ENCODE measurements at regions of chr19 and their contacts with region 1.

Region 1: DNA sequence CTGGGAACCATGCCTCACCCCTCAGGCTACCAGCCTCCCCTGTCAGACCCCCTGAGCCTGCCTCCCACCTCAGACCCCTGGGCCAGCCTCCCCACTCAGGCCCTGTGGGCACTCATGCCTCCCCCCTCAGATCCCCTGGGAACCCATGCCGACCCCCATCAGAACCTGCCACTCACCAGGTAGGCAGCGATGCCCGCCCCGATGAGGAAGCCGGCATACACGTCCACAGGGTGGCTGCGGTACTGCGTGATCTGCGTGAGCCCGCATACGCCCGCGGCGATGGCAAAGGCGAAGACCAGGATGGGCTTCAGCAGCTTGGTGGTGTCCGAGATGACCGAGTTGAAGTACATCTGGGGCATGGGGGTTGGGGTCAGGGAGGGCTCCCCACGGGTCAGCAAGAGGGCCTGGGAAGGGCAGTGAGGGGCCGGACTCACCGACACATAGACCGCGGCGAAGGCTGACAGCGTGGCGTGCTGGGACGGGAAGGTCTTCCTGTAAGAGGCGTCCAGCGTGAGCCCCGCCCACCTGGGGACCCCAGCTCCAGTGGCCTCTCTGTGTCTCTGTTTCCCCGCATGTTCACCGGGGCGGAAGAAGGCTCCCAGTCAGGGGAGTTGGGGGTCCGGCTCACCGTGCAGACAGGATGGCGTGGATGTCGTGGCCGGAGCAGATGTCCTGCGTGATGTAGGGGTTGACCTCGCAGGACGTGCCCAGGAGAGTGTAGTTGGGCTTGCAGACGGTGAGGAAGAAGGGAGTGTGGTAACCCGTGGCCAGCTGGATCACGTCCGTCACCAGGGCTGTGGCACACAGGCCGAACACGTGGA is 7.3 kb downstream of the PLPPR3 start:
- DNase-seq: peak; percentile 27
- ATAC-seq: peak; percentile 17
- H3K4me3 Mint-ChIP-seq: no peak overlapping the region
- H3K27ac Mint-ChIP-seq: no peak overlapping the region
- H3K4me1 Mint-ChIP-seq: no peaks in the 10 kb centered on the region
- H3K27me3 Mint-ChIP-seq: no peaks in the 10 kb centered on the region
- CTCF ChIP-seq: no peak

Region 2: DNA sequence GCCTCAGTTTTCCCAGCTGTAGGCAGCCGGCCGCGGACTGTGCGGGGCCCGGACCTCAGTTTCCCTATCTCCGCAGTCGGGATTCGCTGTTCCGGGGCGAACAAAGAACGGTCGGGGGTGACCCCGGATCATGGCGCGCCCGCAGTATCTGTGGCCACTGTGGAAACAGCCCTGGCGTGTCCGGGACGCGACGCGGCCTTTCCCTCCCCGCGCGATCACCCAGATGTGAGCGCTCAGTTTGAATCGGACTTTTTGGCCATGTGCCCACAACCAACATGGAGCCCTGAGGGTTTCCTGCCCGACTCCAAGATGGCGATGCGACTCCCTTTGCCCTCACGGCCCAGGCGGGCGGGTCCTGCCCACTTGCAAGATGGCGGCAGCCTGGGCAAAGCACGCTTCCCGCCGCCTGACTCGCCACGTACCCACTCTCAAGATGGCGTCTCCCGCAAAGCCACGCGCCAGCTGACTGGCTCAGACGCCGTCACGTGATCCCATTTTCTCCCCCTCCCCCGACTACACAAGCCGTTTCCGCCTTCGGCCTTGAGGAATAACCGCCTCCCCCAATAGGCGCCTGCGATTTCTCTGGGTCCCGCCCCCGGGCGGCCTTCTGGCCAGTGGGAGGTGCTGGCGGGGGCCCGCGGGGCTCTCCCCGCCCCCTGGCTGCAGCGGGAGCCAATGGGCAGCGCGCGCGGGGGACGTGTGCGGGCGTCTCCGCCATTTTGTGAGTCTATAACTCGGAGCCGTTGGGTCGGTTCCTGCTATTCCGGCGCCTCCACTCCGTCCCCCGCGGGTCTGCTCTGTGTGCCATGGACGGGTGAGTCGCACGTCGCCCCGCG is 17.6 kb before region 1 on chr19 and contains the start of gene PTBP1:
- CTCF ChIA-PET with region 1: no interaction called
- POLR2A ChIA-PET with region 1: interaction called, 106 read pairs
- intact Hi-C with region 1: no loop called
- DNase-seq: peak; percentile 100
- ATAC-seq: peak; percentile 87
- H3K4me3 Mint-ChIP-seq: peak within 1 kb of the TSS; percentile 88
- H3K27ac Mint-ChIP-seq: peak within 1 kb of the TSS; percentile 90
- H3K4me1 Mint-ChIP-seq: peaks cover 23% of the 10 kb centered on the region
- H3K27me3 Mint-ChIP-seq: no peaks in the 10 kb centered on the region
- CTCF ChIP-seq: no peak
- total RNA-seq, gene PTBP1: 581 to 582 TPM

Region 3: GRCh38 chr19:827783-828321 is 13.4 kb after region 1 on chr19 and contains the start of gene AZU1:
- CTCF ChIA-PET with region 1: no interaction called
- POLR2A ChIA-PET with region 1: no interaction called
- intact Hi-C with region 1: no loop called
- DNase-seq: no peak
- ATAC-seq: no peak
- H3K4me3 Mint-ChIP-seq: no peak within 1 kb of the TSS
- H3K27ac Mint-ChIP-seq: no peak within 1 kb of the TSS
- H3K4me1 Mint-ChIP-seq: no peaks in the 10 kb centered on the region
- H3K27me3 Mint-ChIP-seq: peaks cover 7% of the 10 kb centered on the region
- CTCF ChIP-seq: no peak
- total RNA-seq, gene AZU1: not detected

Measured in activated CD8-positive, alpha-beta T cell treated with anti-CD3 and anti-CD28 coated beads for 36 hours (primary cell).